Testis (tissue), 5 donors: ENCODE measurements at regions of chr11 and their contacts with region 1.

Region 1: GRCh38 chr11:69106031-69106820 is 49.5 kb upstream of the SMIM38 start:
- DNase-seq: no peak
- H3K4me3 ChIP-seq: no peak overlapping the region
- H3K27ac ChIP-seq: no peak overlapping the region
- H3K4me1 ChIP-seq: no peaks in the 10 kb centered on the region
- H3K27me3 ChIP-seq: no peaks in the 10 kb centered on the region
- CTCF ChIP-seq: no peak
- POLR2A ChIP-seq: no peak

Region 2: GRCh38 chr11:69178819-69179482 is 72.7 kb after region 1 on chr11:
- intact Hi-C with region 1: no loop called
- DNase-seq: no peak
- H3K4me3 ChIP-seq: no peak overlapping the region
- H3K27ac ChIP-seq: no peak overlapping the region
- H3K4me1 ChIP-seq: no peaks in the 10 kb centered on the region
- H3K27me3 ChIP-seq: no peaks in the 10 kb centered on the region
- CTCF ChIP-seq: no peak
- POLR2A ChIP-seq: no peak

Region 3: DNA sequence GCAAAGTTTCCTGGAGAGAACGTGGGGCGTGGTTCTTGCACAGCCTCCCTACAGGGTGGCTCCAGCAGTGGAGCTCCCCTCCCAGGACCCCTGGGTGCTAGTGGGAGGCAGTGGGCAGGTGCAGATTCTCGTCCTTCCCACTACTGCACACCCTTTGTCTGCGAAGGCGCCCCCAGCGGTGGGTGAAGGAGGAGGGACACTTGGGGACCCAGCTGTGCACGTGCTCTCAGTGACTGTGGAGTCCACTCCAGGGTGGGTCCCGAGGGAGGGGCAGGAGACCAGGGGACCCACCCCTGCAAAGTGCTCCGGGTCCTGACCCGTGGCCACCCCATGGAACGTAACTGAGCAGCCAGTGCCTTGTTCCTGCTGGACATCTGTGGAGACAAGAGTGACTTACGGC is 539.1 kb after region 1 on chr11:
- intact Hi-C with region 1: loop called (anchors 5 kb)
- DNase-seq: no peak
- H3K4me3 ChIP-seq: no peak overlapping the region
- H3K27ac ChIP-seq: no peak overlapping the region
- H3K4me1 ChIP-seq: peaks cover 18% of the 10 kb centered on the region
- H3K27me3 ChIP-seq: no peaks in the 10 kb centered on the region
- CTCF ChIP-seq: no peak
- POLR2A ChIP-seq: no peak